ENCODE measurements at regions of chr15 and their contacts with region 1.

Region 1: DNA sequence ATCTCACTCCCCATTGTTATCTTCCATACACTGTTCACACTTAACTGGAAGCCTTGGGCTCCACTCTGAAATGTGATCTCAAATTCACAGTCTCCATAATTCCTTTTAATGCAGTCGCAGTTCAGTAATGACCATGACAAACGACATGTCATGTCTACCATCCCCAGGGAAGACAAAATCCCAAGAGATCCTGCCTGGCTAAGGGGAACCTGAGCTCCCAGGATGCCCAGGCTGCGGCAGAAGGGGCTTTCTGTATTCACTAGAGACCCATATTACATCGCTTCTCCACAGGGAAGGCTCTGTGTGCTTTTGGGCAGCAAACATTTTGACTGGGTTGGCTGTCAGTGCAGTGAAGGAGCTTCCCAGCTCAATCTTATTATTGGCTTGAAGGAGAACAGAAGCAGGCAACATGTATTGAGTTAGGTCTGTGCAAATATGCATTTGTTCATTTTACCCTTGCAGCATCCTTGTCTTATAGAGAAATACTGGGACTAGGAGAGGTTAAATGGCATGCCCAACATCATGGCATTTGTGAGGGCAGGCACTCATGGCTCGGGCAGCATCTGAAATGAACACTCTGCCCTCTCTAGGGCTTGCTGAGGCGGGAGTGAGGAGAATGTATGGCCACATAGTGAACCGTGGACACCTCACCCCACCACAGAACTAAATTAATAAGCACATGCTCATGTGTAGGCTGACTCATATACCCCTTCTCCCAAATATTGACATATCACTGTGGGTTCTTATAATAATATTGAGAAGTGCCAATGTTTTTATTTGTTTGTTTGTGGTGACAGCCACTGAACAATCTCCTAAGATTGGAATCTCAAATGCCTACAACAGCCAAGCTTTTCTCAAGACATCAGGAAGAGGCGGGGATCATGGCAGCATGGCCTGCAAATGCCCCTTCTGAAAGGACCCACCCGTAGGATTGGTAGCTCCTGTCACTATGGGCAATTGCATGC is 141.6 kb upstream of the FOXB1 start:
- DNase-seq: no peak

Region 2: GRCh38 chr15:59711451-59712243 is 150.8 kb before region 1 on chr15:
- intact Hi-C with region 1: loop called in 1 of 2 experiments (anchors 5 kb)
- DNase-seq: no peak

Region 3: DNA sequence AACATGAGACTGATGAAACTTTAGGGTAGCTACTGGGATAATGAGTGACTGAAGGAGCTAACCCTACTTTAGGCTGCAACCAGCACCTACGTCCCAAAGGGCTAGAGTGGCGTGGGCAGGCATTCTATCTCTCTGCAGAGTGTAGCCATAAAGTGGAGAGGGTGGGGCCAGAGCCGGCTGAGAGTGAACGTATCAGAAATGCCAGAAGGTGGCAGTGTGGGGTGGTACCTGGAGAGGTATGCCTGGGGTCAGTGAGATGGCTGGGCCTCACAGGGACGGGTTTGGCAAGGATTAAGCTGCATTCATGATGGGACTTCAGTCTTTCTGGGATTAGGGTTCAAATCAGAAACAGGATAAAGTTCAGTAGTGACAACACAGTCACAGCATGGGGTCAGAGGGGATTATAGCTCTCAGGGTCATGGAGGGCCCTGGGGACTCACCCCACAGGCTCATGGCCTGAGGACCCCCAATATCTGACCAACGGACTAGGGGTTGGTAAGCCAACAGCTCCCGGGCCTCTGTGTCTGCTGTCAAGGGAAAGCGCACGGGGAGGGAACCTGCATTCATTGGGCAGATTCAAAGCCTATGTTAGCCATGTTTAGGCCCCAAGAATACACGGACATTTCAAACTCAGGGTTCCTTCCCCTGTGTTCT is 55.2 kb after region 1 on chr15:
- intact Hi-C with region 1: no loop called
- DNase-seq: no peak

Measured in posterior vena cava (tissue), 2 donors.